CD14-positive monocyte (primary cell): ENCODE measurements at regions of chr6 and their contacts with region 1.

Region 1: GRCh38 chr6:44096612-44097011 is 30.6 kb downstream of the MRPL14 start:
- DNase-seq: peak; percentile 64 to 75 (median 75)
- H3K4me3 ChIP-seq: no peak overlapping the region
- H3K4me3 Mint-ChIP-seq: no peak overlapping the region
- H3K27ac ChIP-seq: no peak overlapping the region
- H3K27ac Mint-ChIP-seq: peak overlapping the region in 1 of 7 donors; percentile 63
- H3K4me1 ChIP-seq: no peaks in the 10 kb centered on the region
- H3K4me1 Mint-ChIP-seq: no peaks in the 10 kb centered on the region
- H3K27me3 ChIP-seq: no peaks in the 10 kb centered on the region
- H3K27me3 Mint-ChIP-seq: peaks cover 0 to 1% (median 0%) of the 10 kb centered on the region in 3 donors
- CTCF ChIP-seq: peak; percentile 80

Region 2: DNA sequence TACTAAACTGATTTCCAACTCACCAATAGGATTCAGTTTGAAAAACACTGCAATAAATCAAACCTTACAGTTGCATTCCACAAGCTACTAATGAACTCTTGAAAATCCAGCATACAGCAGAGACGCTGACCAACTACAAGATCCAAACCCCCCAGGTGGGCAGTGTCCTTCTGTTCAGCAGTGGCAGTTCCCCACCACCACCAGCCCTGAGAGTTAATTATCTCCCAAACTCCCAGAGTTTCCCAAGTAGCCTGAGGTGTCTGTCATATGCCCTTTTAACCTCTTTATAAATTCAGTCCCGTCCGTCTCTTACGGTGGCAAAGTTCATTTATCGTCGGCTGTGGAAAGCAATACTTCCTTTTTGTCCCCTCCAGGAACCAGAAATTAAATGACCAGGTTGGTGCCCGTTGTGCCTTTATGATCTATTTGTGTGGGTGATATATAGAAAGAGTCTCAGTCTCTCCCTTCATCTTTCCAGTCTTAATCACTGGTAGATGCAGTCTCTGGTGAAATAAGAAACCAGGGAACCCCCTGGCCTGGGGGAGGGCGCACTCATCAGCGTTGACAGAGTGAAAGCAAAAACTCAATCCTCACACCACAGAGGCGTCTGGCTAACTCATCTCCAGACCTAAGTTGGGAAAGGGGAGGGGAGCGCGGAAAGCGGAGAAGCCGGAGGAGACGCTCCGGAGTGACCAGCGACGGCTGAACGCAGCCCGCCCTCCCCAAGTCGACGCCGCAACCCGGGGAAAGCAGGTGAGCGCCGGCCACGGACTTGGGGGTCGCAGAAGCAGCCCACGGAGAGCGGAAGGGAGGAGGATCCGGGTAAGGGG is 29.9 kb after region 1 on chr6:
- intact Hi-C with region 1: no loop called
- DNase-seq: peak; percentile 56 to 92 (median 76)
- H3K4me3 ChIP-seq: peak overlapping the region; percentile 87 to 92 (median 87)
- H3K4me3 Mint-ChIP-seq: peak overlapping the region; percentile 92 to 98
- H3K27ac ChIP-seq: peak overlapping the region; percentile 91 to 92
- H3K27ac Mint-ChIP-seq: peak overlapping the region; percentile 90 to 96 (median 94)
- H3K4me1 ChIP-seq: peaks cover 29 to 46% of the 10 kb centered on the region in 2 donors
- H3K4me1 Mint-ChIP-seq: peaks cover 51% of the 10 kb centered on the region
- H3K27me3 ChIP-seq: peaks cover 0 to 4% of the 10 kb centered on the region in 2 donors
- H3K27me3 Mint-ChIP-seq: peaks cover 0 to 8% (median 7%) of the 10 kb centered on the region in 3 donors
- CTCF ChIP-seq: no peak

Region 3: GRCh38 chr6:44142835-44143234 is 46.2 kb after region 1 on chr6:
- intact Hi-C with region 1: loop called in 1 of 2 experiments (anchors 5 kb)
- DNase-seq: no peak
- H3K4me3 ChIP-seq: no peak overlapping the region
- H3K4me3 Mint-ChIP-seq: no peak overlapping the region
- H3K27ac ChIP-seq: no peak overlapping the region
- H3K27ac Mint-ChIP-seq: peak overlapping the region in 1 of 7 donors; percentile 76
- H3K4me1 ChIP-seq: no peaks in the 10 kb centered on the region
- H3K4me1 Mint-ChIP-seq: peaks cover 5% of the 10 kb centered on the region
- H3K27me3 ChIP-seq: no peaks in the 10 kb centered on the region
- H3K27me3 Mint-ChIP-seq: peaks cover 0 to 4% (median 3%) of the 10 kb centered on the region in 3 donors
- CTCF ChIP-seq: no peak

Region 4: GRCh38 chr6:44151348-44152108 is 54.9 kb after region 1 on chr6:
- intact Hi-C with region 1: loop called (anchors 1 to 2 kb)
- DNase-seq: peak; percentile 60 to 78 (median 63)
- H3K4me3 ChIP-seq: no peak overlapping the region
- H3K4me3 Mint-ChIP-seq: no peak overlapping the region
- H3K27ac ChIP-seq: no peak overlapping the region
- H3K27ac Mint-ChIP-seq: no peak overlapping the region
- H3K4me1 ChIP-seq: peaks cover 0 to 4% of the 10 kb centered on the region in 2 donors
- H3K4me1 Mint-ChIP-seq: peaks cover 7% of the 10 kb centered on the region
- H3K27me3 ChIP-seq: no peaks in the 10 kb centered on the region
- H3K27me3 Mint-ChIP-seq: peaks cover 0 to 6% (median 2%) of the 10 kb centered on the region in 3 donors
- CTCF ChIP-seq: peak; percentile 99

Region 5: DNA sequence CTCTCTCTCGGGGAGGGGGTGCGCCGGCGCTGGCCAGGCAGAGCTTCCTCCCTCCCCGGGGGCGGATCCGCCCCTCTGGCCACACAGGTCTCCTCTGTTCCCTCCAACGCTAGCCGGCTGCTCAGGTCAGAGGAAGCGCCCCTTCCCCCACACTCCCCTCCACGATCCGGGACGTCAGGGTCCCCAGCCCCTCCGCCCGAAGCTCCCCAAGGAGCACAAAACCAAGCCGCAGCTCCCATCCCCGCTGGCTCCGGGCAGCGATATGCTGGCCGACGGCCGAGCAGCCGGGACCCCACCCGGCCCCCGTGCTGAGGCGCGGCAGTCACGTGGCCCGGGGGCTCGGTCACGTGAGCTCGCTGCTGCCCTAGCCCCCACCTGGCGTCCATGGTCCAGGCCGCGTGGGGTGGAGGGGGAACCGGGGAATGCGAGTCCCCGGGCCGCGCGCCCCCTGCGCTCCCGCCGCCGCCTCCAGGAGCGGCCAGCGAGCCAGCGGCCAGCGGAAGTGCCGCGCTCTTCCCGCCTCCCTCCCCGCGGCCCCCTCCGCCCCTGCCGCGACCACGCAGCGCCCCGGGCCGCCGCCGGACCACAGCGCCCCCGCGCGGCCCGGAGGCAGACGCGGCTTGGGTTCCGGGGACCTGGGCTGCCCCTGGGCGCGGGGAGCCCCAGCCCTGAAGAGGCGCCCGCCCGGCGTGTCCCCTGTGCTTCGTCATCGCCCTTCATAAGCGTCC is 160.6 kb after region 1 on chr6 and contains the start of gene SLC35B2:
- intact Hi-C with region 1: loop called in 1 of 2 experiments (anchors 5 kb)
- DNase-seq: peak; percentile 76 to 90 (median 79)
- H3K4me3 ChIP-seq: peak within 1 kb of the TSS; percentile 49 to 85 (median 69)
- H3K4me3 Mint-ChIP-seq: peak within 1 kb of the TSS; percentile 79 to 87
- H3K27ac ChIP-seq: peak within 1 kb of the TSS; percentile 66 to 69
- H3K27ac Mint-ChIP-seq: peak within 1 kb of the TSS; percentile 83 to 97 (median 91)
- H3K4me1 ChIP-seq: peaks cover 29 to 52% of the 10 kb centered on the region in 2 donors
- H3K4me1 Mint-ChIP-seq: peaks cover 58% of the 10 kb centered on the region
- H3K27me3 ChIP-seq: no peaks in the 10 kb centered on the region
- H3K27me3 Mint-ChIP-seq: peaks cover 0 to 6% (median 2%) of the 10 kb centered on the region in 3 donors
- CTCF ChIP-seq: peak; percentile 87
- polyA plus RNA-seq, gene SLC35B2: 17.4 to 54.0 (median 30.6) TPM

Region 6: GRCh38 chr6:44332585-44332984 is 236.0 kb after region 1 on chr6:
- intact Hi-C with region 1: loop called in 1 of 2 experiments (anchors 5 kb)
- DNase-seq: no peak
- H3K4me3 ChIP-seq: no peak overlapping the region
- H3K4me3 Mint-ChIP-seq: no peak overlapping the region
- H3K27ac ChIP-seq: no peak overlapping the region
- H3K27ac Mint-ChIP-seq: no peak overlapping the region
- H3K4me1 ChIP-seq: peaks cover 21 to 22% of the 10 kb centered on the region in 2 donors
- H3K4me1 Mint-ChIP-seq: peaks cover 18% of the 10 kb centered on the region
- H3K27me3 ChIP-seq: peaks cover 12 to 19% of the 10 kb centered on the region in 2 donors
- H3K27me3 Mint-ChIP-seq: peaks cover 10 to 24% (median 19%) of the 10 kb centered on the region in 3 donors
- CTCF ChIP-seq: no peak